ENCODE measurements at regions of chr19 and their contacts with region 1.

Region 1: GRCh38 chr19:33143897-33144405 is 12.0 kb downstream of the WDR88 start:
- DNase-seq: peak; percentile 32 to 73 (median 66)
- H3K4me3 ChIP-seq: no peak overlapping the region
- H3K27ac ChIP-seq: no peak overlapping the region
- H3K4me1 ChIP-seq: no peaks in the 10 kb centered on the region
- H3K27me3 ChIP-seq: no peaks in the 10 kb centered on the region
- CTCF ChIP-seq: peak; percentile 78 to 84 (median 81)
- EP300 ChIP-seq: no peak
- POLR2A ChIP-seq: no peak

Region 2: DNA sequence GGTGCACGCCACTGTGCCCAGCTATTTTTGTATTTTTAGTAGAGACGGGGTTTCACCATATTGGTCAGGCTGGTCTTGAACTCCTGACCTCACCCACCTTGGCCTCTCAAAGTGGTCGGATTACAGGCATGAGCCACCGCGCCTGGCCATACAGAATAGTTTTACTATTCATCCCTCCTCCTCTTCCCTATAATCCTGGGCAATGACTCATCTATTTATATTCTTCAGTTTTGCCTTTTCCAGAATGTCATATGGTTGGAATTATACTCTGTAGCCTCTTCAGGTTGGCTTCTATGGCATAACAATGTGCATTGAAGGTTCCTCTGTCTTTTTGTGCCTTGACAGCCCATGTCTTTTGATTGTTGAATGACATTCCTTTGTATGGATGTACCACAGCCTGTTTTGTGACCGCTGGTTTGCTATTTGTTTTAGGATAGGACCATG is 28.0 kb after region 1 on chr19:
- intact Hi-C with region 1: no loop called
- DNase-seq: no peak
- H3K4me3 ChIP-seq: no peak overlapping the region
- H3K27ac ChIP-seq: no peak overlapping the region
- H3K4me1 ChIP-seq: peaks cover 7% of the 10 kb centered on the region
- H3K27me3 ChIP-seq: no peaks in the 10 kb centered on the region
- CTCF ChIP-seq: no peak
- EP300 ChIP-seq: no peak
- POLR2A ChIP-seq: no peak

Region 3: DNA sequence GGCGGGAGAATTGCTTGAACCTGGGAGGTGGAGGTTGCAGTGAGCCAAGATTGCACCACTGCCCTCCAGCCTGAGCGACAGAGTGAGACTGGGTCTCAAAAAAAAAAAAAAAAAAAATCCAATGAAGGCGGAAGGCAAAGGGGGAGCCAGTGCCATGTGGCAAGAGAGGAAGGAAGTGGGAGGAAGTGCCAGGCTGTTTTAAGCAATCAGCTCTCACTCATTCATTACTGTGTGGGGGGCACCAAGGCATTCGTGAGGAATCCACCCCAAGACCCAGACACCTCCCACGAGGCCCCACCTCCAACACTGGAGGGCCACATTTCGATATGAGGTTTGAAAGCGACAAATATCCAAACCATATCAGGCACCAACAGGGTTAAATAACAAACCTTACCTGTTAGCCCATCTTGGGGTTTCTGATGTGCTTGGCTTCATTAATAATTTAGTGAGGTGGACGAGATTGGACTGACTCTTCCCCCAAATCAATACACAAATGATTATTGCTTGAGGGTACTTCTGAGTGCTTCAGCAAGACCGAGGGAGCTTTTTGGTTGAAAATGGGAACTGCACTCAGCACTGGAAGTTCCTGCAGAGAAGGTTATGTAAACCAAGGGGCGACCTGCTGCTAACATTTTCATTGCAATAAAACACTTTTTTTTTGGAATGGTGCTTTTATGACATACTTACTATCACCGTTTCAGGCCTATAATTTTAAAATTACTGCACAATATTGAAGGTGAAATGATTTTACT is 42.7 kb after region 1 on chr19:
- intact Hi-C with region 1: loop called in 2 of 4 experiments (anchors 5 to 10 kb)
- DNase-seq: no peak
- H3K4me3 ChIP-seq: no peak overlapping the region
- H3K27ac ChIP-seq: no peak overlapping the region
- H3K4me1 ChIP-seq: no peaks in the 10 kb centered on the region
- H3K27me3 ChIP-seq: no peaks in the 10 kb centered on the region
- CTCF ChIP-seq: no peak
- EP300 ChIP-seq: no peak
- POLR2A ChIP-seq: no peak

Region 4: GRCh38 chr19:33208904-33209849 is 65.2 kb after region 1 on chr19:
- intact Hi-C with region 1: loop called in 1 of 4 experiments (anchors 10 kb)
- DNase-seq: peak; percentile 59 to 86 (median 73)
- H3K4me3 ChIP-seq: no peak overlapping the region
- H3K27ac ChIP-seq: peak overlapping the region in 1 of 2 donors; percentile 21
- H3K4me1 ChIP-seq: no peaks in the 10 kb centered on the region
- H3K27me3 ChIP-seq: no peaks in the 10 kb centered on the region
- CTCF ChIP-seq: peak in 1 of 3 donors; percentile 13
- EP300 ChIP-seq: no peak
- POLR2A ChIP-seq: no peak

Measured in ovary (tissue), 10 donors.